H1 (cell line): ENCODE measurements at regions of chr18 and their contacts with region 1.

Region 1: GRCh38 chr18:74196220-74197119 is 48.1 kb downstream of the TIMM21 start:
- DNase-seq: no peak
- H3K4me3 ChIP-seq: peak overlapping the region in 1 of 4 experiments; percentile 27; a peak in 1 of 8 replicates
- H3K27ac ChIP-seq: no peak overlapping the region
- H3K4me1 ChIP-seq: peaks cover 0 to 5% (median 2%) of the 10 kb centered on the region in 4 experiments; a peak in 4 of 7 replicates
- H3K27me3 ChIP-seq: no peaks in the 10 kb centered on the region
- CTCF ChIP-seq: peak; percentile 48 to 76 (median 70)
- EP300 ChIP-seq: no peak
- POLR2A ChIP-seq: no peak
- RAD21 ChIP-seq: peak; percentile 89 to 91

Region 2: GRCh38 chr18:73669299-73669698 is 527.2 kb before region 1 on chr18:
- CTCF ChIA-PET with region 1: no interaction called
- POLR2A ChIA-PET with region 1: no interaction called
- DNase-seq: no peak
- H3K4me3 ChIP-seq: no peak overlapping the region
- H3K27ac ChIP-seq: no peak overlapping the region
- H3K4me1 ChIP-seq: no peaks in the 10 kb centered on the region
- H3K27me3 ChIP-seq: no peaks in the 10 kb centered on the region
- CTCF ChIP-seq: no peak
- EP300 ChIP-seq: no peak
- POLR2A ChIP-seq: no peak
- RAD21 ChIP-seq: no peak

Region 3: DNA sequence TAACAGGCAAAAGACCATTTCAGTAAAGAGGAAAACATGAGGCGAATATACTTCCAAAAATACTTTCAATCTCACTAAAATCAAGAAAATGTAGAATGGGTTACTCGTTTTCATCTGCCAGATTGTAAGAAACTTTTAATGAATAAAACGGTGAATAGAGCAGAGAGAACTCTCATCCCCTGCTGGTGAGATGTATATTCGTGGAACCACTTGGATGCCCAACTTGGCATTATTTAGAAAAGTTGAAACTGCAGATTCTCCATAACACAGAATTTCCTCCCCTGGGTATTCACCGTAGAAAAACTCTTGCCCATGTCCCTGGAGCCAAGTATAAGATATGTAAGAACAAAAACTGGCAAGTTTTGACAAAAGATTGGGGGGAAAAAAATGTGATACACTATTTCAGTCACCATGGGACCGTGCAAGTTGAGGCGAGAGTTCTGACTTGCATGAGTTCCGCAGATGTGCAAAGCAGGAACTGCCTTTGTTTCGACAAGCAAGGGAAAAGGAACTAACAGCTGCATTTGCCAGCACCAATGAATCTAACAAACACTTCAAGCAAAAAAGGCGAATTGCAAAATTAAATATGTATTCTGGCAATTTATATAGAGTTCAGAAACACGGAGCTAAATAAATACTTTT is 33.3 kb before region 1 on chr18:
- CTCF ChIA-PET with region 1: no interaction called
- POLR2A ChIA-PET with region 1: no interaction called
- DNase-seq: no peak
- H3K4me3 ChIP-seq: no peak overlapping the region
- H3K27ac ChIP-seq: no peak overlapping the region
- H3K4me1 ChIP-seq: no peaks in the 10 kb centered on the region
- H3K27me3 ChIP-seq: no peaks in the 10 kb centered on the region; a peak in 2 of 7 replicates
- CTCF ChIP-seq: no peak
- EP300 ChIP-seq: no peak
- POLR2A ChIP-seq: no peak
- RAD21 ChIP-seq: no peak

Region 4: DNA sequence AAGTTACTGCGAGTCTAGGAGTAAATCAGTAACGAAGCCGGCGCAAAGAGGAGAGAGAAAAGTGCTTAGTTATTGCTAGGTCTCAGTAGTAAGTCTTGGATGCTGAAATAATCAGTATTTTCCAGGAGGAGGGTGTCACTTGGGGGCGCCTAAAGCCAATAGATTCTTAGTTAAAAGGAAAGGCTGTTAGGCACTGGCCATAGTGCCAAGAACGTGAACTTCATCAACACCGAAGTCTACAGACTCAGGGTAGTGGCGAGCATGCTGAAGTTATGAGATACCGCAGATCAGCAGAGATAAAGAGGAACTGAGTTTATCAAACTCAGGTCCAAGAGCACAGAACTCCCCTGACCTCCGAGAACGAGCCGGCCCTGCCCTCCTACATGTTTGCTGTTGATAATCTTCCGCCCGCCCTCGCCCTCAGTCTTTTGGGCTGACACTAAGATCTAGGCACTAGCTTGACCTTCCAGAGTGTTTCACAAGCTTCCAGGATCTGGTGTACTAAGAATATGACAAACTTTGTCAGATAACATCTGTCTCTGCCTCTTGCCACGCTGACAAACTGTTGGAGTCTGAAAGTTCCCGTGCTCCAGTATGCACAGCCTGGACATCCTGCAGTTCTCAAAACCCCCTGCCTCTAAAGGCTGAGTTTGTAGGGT is 46.1 kb after region 1 on chr18:
- CTCF ChIA-PET with region 1: interaction called, 16 read pairs
- POLR2A ChIA-PET with region 1: no interaction called
- DNase-seq: no peak
- H3K4me3 ChIP-seq: no peak overlapping the region
- H3K27ac ChIP-seq: no peak overlapping the region
- H3K4me1 ChIP-seq: peaks cover 0 to 4% (median 0%) of the 10 kb centered on the region in 4 experiments; a peak in 4 of 7 replicates
- H3K27me3 ChIP-seq: no peaks in the 10 kb centered on the region
- CTCF ChIP-seq: peak in 2 of 3 experiments; percentile 22 to 45; a peak in 3 of 4 replicates
- EP300 ChIP-seq: no peak
- POLR2A ChIP-seq: no peak
- RAD21 ChIP-seq: peak; percentile 57 to 66

Region 5: DNA sequence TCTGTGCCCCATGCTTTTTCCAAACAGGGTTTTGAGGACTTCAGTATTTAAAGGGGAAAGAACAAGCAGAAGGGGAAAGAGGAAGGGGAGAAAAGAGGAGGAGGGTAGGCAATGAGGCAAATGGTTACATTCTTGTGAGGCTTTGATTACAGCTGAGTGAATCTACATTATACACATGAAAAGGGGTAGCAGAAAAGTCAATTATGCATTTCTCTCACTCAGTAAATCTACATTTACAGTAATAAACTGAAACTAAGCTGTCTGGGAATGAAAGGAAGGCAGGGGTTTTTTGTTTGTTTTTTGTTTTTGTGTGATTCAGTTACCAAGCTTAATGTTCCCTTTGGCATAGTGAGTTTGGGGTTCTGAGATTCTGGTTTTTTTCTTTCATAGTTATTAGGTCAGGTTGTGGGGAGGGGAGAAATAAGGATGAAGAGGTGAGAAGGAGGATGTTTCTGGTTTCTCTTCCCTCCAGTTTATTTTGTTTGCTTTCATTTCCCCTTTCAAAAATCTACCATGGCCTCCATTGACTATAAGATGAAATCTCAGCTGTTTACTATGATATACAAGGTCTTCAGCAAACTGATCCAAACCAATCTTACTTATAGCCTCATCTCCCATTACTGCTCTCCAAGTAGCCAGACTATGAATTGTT is 137.9 kb after region 1 on chr18:
- CTCF ChIA-PET with region 1: interaction called, 19 read pairs
- POLR2A ChIA-PET with region 1: no interaction called
- DNase-seq: no peak
- H3K4me3 ChIP-seq: no peak overlapping the region
- H3K27ac ChIP-seq: no peak overlapping the region
- H3K4me1 ChIP-seq: no peaks in the 10 kb centered on the region
- H3K27me3 ChIP-seq: no peaks in the 10 kb centered on the region
- CTCF ChIP-seq: no peak
- EP300 ChIP-seq: no peak
- POLR2A ChIP-seq: no peak
- RAD21 ChIP-seq: no peak